A549 (cell line): ENCODE measurements at regions of chr19 and their contacts with region 1.

Region 1: GRCh38 chr19:19488875-19489690 is 26.3 kb downstream of the TSSK6 start:
- DNase-seq: peak; percentile 38 to 69
- ATAC-seq: peak; percentile 35 to 44; a peak in 5 of 6 replicates
- H3K4me3 ChIP-seq: no peak overlapping the region
- H3K27ac ChIP-seq: peak overlapping the region; percentile 30 to 72; a peak in 4 of 6 replicates
- H3K4me1 ChIP-seq: peaks cover 20% of the 10 kb centered on the region; the same call in 2 of the 3 replicates
- CTCF ChIP-seq: no peak
- EP300 ChIP-seq: no peak
- POLR2A ChIP-seq: no peak
- RAD21 ChIP-seq: no peak

Region 2: DNA sequence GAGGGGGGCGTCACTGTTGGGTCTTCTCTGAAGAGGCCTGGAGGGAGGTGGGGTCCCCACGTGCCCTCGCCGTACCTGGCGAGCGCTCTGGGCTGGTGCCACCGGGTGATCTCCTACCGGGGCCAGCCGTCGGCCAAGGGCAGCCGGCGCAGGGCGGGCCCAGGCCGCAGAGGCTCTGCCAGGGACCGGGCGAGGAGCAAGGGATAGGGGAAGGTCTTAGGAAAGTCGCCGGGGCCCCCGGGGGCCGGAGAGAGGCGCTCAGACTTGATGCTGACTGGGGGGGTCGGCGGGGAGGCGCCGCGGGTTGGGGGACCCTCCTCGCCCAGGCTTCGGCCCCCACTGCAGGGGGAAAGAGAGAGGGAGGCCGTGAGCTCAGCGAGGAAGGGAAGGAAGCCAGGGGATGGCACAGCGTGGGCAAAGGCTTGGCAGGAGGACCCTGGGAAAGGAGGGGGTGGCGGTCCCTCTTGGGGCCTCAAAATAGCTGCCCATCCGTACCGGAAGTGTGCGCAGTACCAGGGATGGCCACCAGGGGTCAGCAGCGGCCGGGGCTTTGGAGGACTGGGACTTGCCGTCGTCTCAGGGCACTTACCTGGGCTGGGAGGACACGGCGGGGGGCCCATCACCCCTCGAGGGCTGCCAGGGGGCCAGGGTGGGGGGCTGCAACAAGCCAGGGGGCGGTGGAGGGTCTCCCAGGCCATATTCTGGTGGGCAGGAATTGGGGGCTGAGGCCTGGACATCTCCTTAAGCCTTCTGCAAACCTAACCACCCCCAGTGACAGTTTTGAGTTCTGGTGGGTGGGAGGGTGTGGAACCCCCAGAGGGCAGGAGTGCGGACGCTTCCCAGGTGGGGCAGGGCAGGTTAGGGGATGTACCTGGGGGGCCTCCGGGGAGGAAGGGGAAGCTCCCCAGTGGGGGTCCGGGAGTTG is 343.1 kb before region 1 on chr19:
- CTCF ChIA-PET with region 1: interaction called, 11 read pairs
- POLR2A ChIA-PET with region 1: no interaction called
- DNase-seq: peak; percentile 32 to 55
- ATAC-seq: peak; percentile 80 to 89; a peak in 5 of 6 replicates
- H3K4me3 ChIP-seq: no peak overlapping the region
- H3K27ac ChIP-seq: peak overlapping the region in 1 of 2 experiments; percentile 63; a peak in 2 of 6 replicates
- H3K4me1 ChIP-seq: no peaks in the 10 kb centered on the region
- CTCF ChIP-seq: peak; percentile 65
- EP300 ChIP-seq: no peak
- POLR2A ChIP-seq: no peak
- RAD21 ChIP-seq: peak; percentile 77 to 79

Region 3: GRCh38 chr19:19366612-19367396 is 122.3 kb before region 1 on chr19:
- CTCF ChIA-PET with region 1: interaction called, 53 read pairs
- POLR2A ChIA-PET with region 1: no interaction called
- DNase-seq: peak; percentile 69 to 90
- ATAC-seq: peak; percentile 86 to 91
- H3K4me3 ChIP-seq: no peak overlapping the region
- H3K27ac ChIP-seq: peak overlapping the region; percentile 44 to 79; a peak in 4 of 6 replicates
- H3K4me1 ChIP-seq: peaks cover 15% of the 10 kb centered on the region; the same call in 2 of the 3 replicates
- CTCF ChIP-seq: peak; percentile 73
- EP300 ChIP-seq: no peak
- POLR2A ChIP-seq: no peak
- RAD21 ChIP-seq: peak; percentile 68 to 77

Region 4: GRCh38 chr19:19475849-19476828 is 12.9 kb before region 1 on chr19:
- CTCF ChIA-PET with region 1: interaction called, 23 read pairs
- POLR2A ChIA-PET with region 1: no interaction called
- DNase-seq: peak; percentile 21 to 44
- ATAC-seq: peak; percentile 62 to 87; a peak in 5 of 6 replicates
- H3K4me3 ChIP-seq: no peak overlapping the region
- H3K27ac ChIP-seq: no peak overlapping the region
- H3K4me1 ChIP-seq: peaks cover 9% of the 10 kb centered on the region
- CTCF ChIP-seq: no peak
- EP300 ChIP-seq: no peak
- POLR2A ChIP-seq: no peak
- RAD21 ChIP-seq: peak in 1 of 2 experiments; percentile 37; a peak in 2 of 5 replicates

Region 5: DNA sequence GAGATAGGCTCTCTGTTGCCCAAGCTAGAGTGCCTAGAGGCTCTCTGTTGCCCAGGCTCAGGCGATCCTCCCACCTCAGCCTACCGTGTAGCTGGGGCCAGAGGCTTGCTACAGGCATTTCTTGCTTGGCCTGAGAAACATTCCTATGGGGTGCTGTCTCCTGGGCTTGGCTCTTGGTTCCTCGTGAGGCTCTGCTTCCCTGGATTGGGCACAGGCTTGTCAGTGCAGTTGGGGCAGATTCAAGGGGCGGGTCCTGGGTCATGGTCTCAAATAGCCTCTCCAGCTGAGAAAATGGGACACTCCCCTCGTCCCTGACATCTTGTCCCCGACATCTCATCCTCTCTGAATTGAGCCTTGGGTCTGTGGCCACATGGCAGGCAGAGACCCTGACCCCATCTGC is 21.3 kb after region 1 on chr19:
- CTCF ChIA-PET with region 1: interaction called, 18 read pairs
- POLR2A ChIA-PET with region 1: no interaction called
- DNase-seq: no peak
- ATAC-seq: peak in 1 of 2 experiments; percentile 40; a peak in 3 of 6 replicates
- H3K4me3 ChIP-seq: no peak overlapping the region
- H3K27ac ChIP-seq: no peak overlapping the region
- H3K4me1 ChIP-seq: 0 out of 3 replicates have a peak, but pooled peaks cover 3% of the 10 kb centered on the region
- CTCF ChIP-seq: no peak
- EP300 ChIP-seq: no peak
- POLR2A ChIP-seq: no peak
- RAD21 ChIP-seq: no peak

Region 6: DNA sequence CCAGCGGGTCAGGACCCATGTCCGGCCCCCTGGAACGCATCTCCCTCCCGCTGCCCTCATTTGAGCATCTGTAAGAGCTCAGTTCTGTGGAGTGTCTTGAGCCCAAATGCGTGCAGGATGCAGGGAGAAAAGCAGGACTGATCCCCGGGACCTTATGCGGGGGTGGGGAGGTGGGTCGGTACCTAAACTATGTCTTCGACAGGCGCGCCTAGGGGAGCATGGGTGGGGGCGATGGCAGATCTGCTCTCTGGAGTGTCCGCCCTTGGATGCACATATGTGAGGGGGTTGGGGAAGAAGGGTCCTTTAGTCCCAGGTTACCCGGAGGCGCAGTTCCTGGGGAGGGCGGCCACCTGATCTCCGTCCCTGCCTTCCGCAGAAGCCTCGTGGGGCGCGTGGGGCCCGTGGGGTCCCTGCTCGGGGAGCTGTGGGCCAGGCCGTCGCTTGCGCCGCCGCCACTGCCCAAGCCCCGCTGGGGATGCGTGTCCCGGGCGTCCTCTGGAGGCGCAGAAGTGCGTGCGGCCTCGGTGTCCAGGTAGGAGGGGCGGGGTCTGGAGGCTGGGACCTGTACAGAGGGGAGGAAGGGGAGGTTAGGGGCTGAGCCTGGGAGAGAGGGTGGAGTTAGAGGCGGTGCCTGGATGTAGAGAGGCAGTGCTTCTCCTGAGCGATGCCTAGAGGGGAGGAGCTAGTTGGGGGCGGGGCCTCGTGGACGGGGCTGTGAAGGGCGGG is 51.8 kb after region 1 on chr19:
- CTCF ChIA-PET with region 1: no interaction called
- POLR2A ChIA-PET with region 1: no interaction called
- DNase-seq: peak in 1 of 2 experiments; percentile 45
- ATAC-seq: peak; percentile 53 to 79; a peak in 5 of 6 replicates
- H3K4me3 ChIP-seq: no peak overlapping the region
- H3K27ac ChIP-seq: no peak overlapping the region
- H3K4me1 ChIP-seq: no peaks in the 10 kb centered on the region
- CTCF ChIP-seq: no peak
- EP300 ChIP-seq: no peak
- POLR2A ChIP-seq: no peak
- RAD21 ChIP-seq: no peak

Region 7: DNA sequence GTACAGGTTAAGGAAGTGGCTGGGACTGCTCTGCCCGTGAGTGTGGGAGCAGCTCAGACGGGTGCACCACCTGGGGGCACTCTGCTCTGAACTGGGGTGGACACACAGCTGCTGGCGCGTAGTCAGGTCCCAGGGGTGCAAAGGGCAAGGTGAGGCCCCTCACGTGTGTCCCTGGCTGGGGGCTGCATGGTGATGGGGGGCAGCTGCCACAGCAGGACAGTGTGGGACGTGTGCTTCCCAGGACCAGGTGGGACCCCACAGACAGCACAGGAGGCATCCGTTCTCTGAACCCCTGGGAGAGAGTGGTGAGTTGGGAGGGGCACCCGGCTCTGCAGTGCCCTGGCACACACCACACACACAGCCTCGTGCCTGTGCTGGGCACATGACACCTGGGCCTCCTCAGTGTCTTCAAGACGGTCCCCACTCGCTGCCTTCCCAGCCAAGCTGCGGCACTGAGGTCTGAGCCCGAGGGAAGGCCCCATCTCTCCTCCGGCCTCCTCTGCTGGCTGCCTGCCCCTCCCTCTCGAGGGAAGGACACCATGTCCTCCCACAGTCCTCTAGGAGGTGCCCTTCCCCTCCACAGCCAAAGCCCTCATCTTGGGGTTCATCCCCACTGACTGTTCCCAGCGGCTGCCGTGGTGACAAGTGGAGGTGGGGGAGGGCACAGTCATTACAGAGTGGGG is 73.7 kb after region 1 on chr19:
- CTCF ChIA-PET with region 1: no interaction called
- POLR2A ChIA-PET with region 1: no interaction called
- DNase-seq: no peak
- ATAC-seq: peak; percentile 26 to 54; a peak in 2 of 6 replicates
- H3K4me3 ChIP-seq: no peak overlapping the region
- H3K27ac ChIP-seq: no peak overlapping the region
- H3K4me1 ChIP-seq: no peaks in the 10 kb centered on the region
- CTCF ChIP-seq: no peak
- EP300 ChIP-seq: no peak
- POLR2A ChIP-seq: no peak
- RAD21 ChIP-seq: no peak